Activated T-helper 1 cell treated with anti-CD3 and anti-CD28 coated beads, Interleukin-12 subunit alpha, Interleukin-12 subunit beta, Interleukin-2, Interleukin-4 antibody, amounts not matched to agents 30 ng/mL and 10 ng/mL and 1 ng/mL, durations not matched to agents 14 hours and 24 hours and 36 hours (primary cell): ENCODE measurements at regions of chr10 and their contacts with region 1.

Region 1: GRCh38 chr10:3239066-3239919 is 66.7 kb upstream of the PITRM1 start:
- DNase-seq: peak; percentile 54
- H3K4me3 Mint-ChIP-seq: no peak overlapping the region
- H3K27ac Mint-ChIP-seq: no peak overlapping the region
- H3K4me1 Mint-ChIP-seq: no peaks in the 10 kb centered on the region
- H3K27me3 Mint-ChIP-seq: peaks cover 48% of the 10 kb centered on the region

Region 2: DNA sequence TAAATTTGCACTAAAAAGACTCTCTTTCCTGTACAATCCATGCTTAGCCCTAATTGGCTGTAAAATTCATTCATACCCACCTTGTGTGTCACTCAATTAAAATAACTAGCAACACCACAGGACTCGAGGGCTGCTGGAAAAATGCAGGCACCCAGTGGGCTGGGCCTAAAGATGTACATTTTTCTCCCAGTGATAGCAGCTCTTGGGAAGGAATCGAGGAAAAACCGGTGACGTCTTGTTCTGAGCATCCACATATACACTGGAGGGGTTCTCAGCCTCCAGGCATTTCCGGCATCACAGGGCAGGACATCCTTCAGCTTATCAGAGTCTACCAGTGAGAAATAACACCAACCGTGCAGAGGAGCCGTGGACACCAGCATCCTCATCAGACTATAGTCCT is 19.1 kb after region 1 on chr10:
- intact Hi-C with region 1: no loop called
- DNase-seq: no peak
- H3K4me3 Mint-ChIP-seq: no peak overlapping the region
- H3K27ac Mint-ChIP-seq: no peak overlapping the region
- H3K4me1 Mint-ChIP-seq: no peaks in the 10 kb centered on the region
- H3K27me3 Mint-ChIP-seq: peaks cover 40% of the 10 kb centered on the region

Region 3: GRCh38 chr10:4767033-4767814 is 1527.9 kb after region 1 on chr10:
- intact Hi-C with region 1: loop called (anchors 2 kb)
- DNase-seq: no peak
- H3K4me3 Mint-ChIP-seq: no peak overlapping the region
- H3K27ac Mint-ChIP-seq: no peak overlapping the region
- H3K4me1 Mint-ChIP-seq: no peaks in the 10 kb centered on the region
- H3K27me3 Mint-ChIP-seq: peaks cover 24% of the 10 kb centered on the region